ENCODE measurements at regions of chr18 and their contacts with region 1.

Region 1: GRCh38 chr18:50559752-50560680 is at the start of gene MAPK4:
- DNase-seq: no peak
- total RNA-seq, gene MAPK4: 38.2 TPM

Region 2: GRCh38 chr18:50662177-50662576 is 102.2 kb after region 1 on chr18:
- intact Hi-C with region 1: loop called (anchors 5 kb)
- DNase-seq: no peak

Measured in cardiac septum (tissue), 1 donor.